OCI-LY7 (cell line): ENCODE measurements at regions of chr1 and their contacts with region 1.

Region 1: DNA sequence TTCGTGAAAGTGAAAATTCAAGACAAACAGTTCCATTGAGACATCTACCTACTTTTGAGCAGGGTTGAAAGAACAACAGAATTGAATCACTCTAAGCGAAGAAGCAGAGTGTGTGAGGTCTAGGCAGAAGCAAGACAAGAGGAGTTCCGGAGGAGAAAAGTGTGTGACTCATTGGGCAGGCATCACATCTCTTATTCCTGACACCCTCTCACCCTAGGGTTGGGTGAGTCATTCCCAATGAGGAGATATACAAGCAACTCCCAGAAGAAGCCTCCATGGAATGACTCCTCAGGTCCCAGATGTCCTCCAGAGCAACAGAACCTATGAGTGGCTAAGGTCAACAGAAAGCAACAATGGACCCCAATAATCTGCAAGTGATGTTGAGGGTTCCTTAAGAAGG is 138.1 kb downstream of the TPR start:
- DNase-seq: no peak
- H3K4me3 ChIP-seq: no peak overlapping the region
- H3K27ac ChIP-seq: no peak overlapping the region
- H3K4me1 ChIP-seq: peaks cover 1% of the 10 kb centered on the region
- CTCF ChIP-seq: no peak

Region 2: DNA sequence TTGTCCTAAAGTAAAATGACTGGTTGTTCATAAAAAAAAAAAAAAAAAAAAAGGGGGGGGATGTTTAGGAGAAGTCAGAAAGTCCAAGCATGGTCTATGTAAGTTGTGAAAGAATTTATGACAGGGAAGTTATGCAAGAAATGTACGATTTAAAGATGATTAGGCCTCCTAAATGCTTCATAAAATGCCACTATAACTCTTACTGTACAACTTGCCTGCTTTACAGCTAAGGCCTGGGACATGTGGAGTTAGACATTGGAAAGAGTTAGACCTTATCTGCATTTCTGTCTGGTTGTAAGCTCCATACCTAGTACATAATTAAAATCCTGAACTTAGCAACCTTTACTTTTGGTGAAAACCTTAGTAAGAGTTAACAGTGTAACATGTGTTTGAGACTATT is 11.8 kb before region 1 on chr1:
- CTCF ChIA-PET with region 1: no interaction called
- POLR2A ChIA-PET with region 1: interaction called, 21 read pairs
- intact Hi-C with region 1: no loop called
- DNase-seq: no peak
- H3K4me3 ChIP-seq: no peak overlapping the region
- H3K27ac ChIP-seq: no peak overlapping the region
- H3K4me1 ChIP-seq: peaks cover 10% of the 10 kb centered on the region
- CTCF ChIP-seq: no peak

Region 3: GRCh38 chr1:186404454-186405051 is 167.6 kb after region 1 on chr1:
- CTCF ChIA-PET with region 1: no interaction called
- POLR2A ChIA-PET with region 1: no interaction called
- intact Hi-C with region 1: no loop called
- DNase-seq: peak; percentile 44
- H3K4me3 ChIP-seq: no peak overlapping the region
- H3K27ac ChIP-seq: no peak overlapping the region
- H3K4me1 ChIP-seq: no peaks in the 10 kb centered on the region
- CTCF ChIP-seq: peak; percentile 90

Region 4: GRCh38 chr1:186443638-186444037 is 206.7 kb after region 1 on chr1:
- CTCF ChIA-PET with region 1: no interaction called
- POLR2A ChIA-PET with region 1: no interaction called
- intact Hi-C with region 1: no loop called
- DNase-seq: no peak
- H3K4me3 ChIP-seq: no peak overlapping the region
- H3K27ac ChIP-seq: no peak overlapping the region
- H3K4me1 ChIP-seq: no peaks in the 10 kb centered on the region
- CTCF ChIP-seq: no peak